Psoas muscle (tissue), 8 donors: ENCODE measurements at regions of chr7 and their contacts with region 1.

Region 1: GRCh38 chr7:107879400-107880035 is 11.5 kb upstream of the DLD start:
- DNase-seq: no peak
- ATAC-seq: peak; percentile 60 to 91 (median 82)
- H3K4me3 ChIP-seq: no peak overlapping the region
- H3K27ac ChIP-seq: no peak overlapping the region
- H3K4me1 ChIP-seq: no peaks in the 10 kb centered on the region
- H3K27me3 ChIP-seq: no peaks in the 10 kb centered on the region
- CTCF ChIP-seq: peak; percentile 86

Region 2: GRCh38 chr7:107168233-107169119 is 711.0 kb before region 1 on chr7 and contains the start of gene HBP1:
- intact Hi-C with region 1: loop called in 1 of 2 experiments (anchors 10 kb)
- DNase-seq: peak; percentile 99
- ATAC-seq: peak; percentile 88 to 94 (median 90)
- H3K4me3 ChIP-seq: peak within 1 kb of the TSS; percentile 82
- H3K27ac ChIP-seq: peak within 1 kb of the TSS; percentile 99
- H3K4me1 ChIP-seq: peaks cover 33% of the 10 kb centered on the region
- H3K27me3 ChIP-seq: no peaks in the 10 kb centered on the region
- CTCF ChIP-seq: no peak
- total RNA-seq, gene HBP1: 65.3 to 74.9 (median 70.7) TPM

Region 3: GRCh38 chr7:107462740-107463444 is 416.6 kb before region 1 on chr7:
- intact Hi-C with region 1: loop called (anchors 5 to 10 kb)
- DNase-seq: peak; percentile 34 to 64
- ATAC-seq: peak; percentile 85 to 97 (median 88)
- H3K4me3 ChIP-seq: no peak overlapping the region
- H3K27ac ChIP-seq: no peak overlapping the region
- H3K4me1 ChIP-seq: no peaks in the 10 kb centered on the region
- H3K27me3 ChIP-seq: no peaks in the 10 kb centered on the region
- CTCF ChIP-seq: peak; percentile 77

Region 4: GRCh38 chr7:107622429-107622828 is 257.1 kb before region 1 on chr7:
- intact Hi-C with region 1: no loop called
- DNase-seq: no peak
- ATAC-seq: peak; percentile 34 to 82 (median 62)
- H3K4me3 ChIP-seq: no peak overlapping the region
- H3K27ac ChIP-seq: no peak overlapping the region
- H3K4me1 ChIP-seq: no peaks in the 10 kb centered on the region
- H3K27me3 ChIP-seq: no peaks in the 10 kb centered on the region
- CTCF ChIP-seq: no peak

Region 5: GRCh38 chr7:107743567-107744344 is 135.8 kb before region 1 on chr7 and contains the start of gene CBLL1:
- intact Hi-C with region 1: loop called (anchors 1 to 5 kb)
- DNase-seq: peak; percentile 98 to 99
- ATAC-seq: peak; percentile 98 to 99 (median 98)
- H3K4me3 ChIP-seq: peak within 1 kb of the TSS; percentile 91
- H3K27ac ChIP-seq: peak within 1 kb of the TSS; percentile 93
- H3K4me1 ChIP-seq: peaks cover 33% of the 10 kb centered on the region
- H3K27me3 ChIP-seq: no peaks in the 10 kb centered on the region
- CTCF ChIP-seq: peak; percentile 77
- total RNA-seq, gene CBLL1: 21.0 to 32.6 (median 26.1) TPM